ENCODE measurements at regions of chr4 and their contacts with region 1.

Region 1: DNA sequence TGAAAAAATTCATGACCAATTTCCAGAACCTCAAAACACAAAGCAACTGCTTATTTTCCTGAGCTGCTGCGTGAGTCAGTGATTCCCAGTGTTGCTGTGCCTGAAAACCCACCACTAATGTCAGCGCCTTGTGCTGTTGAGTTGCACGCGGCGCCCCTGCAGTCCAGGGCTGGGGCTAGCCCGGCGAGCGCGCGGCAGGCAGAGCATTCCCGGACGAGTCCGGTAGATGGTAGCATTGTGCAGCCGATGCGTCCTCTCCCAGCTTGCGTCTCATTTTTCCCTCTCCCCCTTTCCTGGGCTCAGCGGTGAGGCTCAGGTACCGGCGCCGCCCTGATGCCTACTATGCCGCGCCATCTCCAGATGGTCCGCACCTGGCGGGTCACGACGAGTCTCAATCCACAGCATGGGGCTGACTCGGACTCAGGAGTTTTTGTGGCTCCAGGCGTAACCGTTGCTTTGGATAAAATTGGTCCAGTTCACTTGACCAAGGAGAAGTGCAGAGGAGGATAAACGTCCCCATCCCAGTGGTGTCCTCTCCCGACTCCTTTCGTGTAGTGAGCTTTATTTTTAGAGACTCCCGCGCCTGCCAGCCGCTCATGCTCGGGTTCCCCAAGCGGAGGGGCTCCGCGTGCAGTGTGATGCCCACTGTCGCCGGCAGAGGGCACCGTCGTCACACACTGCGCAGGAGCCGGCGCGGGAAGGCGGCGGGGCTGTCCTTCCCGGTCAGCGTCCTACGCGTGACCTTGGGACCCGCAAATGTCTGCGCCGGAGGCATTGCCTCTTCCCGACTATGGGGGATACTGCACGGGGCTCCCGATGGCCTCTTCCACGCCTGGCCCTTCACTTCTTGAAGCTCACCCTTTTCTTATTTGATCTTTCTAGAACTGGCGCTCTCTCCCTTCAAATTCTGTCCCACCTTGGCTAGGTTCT is 53.6 kb upstream of the IGFBP7 start:
- DNase-seq: peak; percentile 76
- H3K27ac ChIP-seq: peak overlapping the region; percentile 81
- CTCF ChIP-seq: peak; percentile 97

Region 2: DNA sequence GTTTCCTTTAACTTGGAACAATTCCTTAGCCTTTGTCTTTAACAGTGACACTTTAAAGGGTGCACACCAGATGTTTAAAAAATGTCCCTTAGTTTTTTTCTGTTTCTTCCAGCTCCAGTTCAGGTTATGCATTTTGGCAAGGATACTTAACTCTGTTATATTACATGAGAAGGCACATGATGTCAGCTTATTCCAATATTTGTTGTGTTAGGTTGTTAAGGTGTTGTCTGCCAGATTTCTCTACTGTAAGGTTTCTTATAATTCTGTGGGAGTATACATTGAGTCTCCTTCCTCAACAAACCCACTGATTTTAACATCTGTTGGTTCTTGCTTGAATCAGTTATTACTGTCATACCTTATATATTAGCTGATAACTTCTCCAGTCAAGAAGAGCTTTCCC is 222.8 kb before region 1 on chr4:
- CTCF ChIA-PET with region 1: no interaction called
- POLR2A ChIA-PET with region 1: no interaction called
- DNase-seq: no peak
- H3K27ac ChIP-seq: no peak overlapping the region
- CTCF ChIP-seq: no peak

Region 3: DNA sequence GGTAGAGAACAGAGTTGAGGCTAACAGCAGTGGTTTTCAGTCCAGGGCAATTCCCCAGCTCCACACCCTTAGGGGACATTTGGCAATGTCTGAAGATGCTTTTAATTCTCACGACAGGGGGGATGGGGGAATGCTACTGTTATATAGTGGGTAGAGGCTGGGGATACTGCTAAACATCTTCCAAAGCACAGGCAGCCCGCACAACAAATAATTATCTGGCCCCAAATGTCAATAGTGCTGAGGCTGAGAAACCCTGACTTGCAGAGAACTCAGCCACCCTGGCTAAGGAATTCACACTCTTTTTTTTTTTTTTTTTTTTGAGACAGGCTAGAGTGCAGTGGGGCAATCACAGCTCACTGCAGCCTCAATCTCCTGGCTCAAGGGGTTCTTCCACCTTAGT is 124.5 kb before region 1 on chr4:
- CTCF ChIA-PET with region 1: interaction called, 16 read pairs
- POLR2A ChIA-PET with region 1: no interaction called
- DNase-seq: no peak
- H3K27ac ChIP-seq: peak overlapping the region; percentile 48
- CTCF ChIP-seq: no peak

Region 4: GRCh38 chr4:57190601-57191481 is 27.0 kb after region 1 on chr4:
- CTCF ChIA-PET with region 1: interaction called, 22 read pairs
- POLR2A ChIA-PET with region 1: no interaction called
- DNase-seq: no peak
- H3K27ac ChIP-seq: no peak overlapping the region
- CTCF ChIP-seq: no peak

Region 5: GRCh38 chr4:57233386-57233785 is 69.6 kb after region 1 on chr4:
- CTCF ChIA-PET with region 1: no interaction called
- POLR2A ChIA-PET with region 1: no interaction called
- DNase-seq: peak; percentile 55
- H3K27ac ChIP-seq: no peak overlapping the region
- CTCF ChIP-seq: no peak

Region 6: DNA sequence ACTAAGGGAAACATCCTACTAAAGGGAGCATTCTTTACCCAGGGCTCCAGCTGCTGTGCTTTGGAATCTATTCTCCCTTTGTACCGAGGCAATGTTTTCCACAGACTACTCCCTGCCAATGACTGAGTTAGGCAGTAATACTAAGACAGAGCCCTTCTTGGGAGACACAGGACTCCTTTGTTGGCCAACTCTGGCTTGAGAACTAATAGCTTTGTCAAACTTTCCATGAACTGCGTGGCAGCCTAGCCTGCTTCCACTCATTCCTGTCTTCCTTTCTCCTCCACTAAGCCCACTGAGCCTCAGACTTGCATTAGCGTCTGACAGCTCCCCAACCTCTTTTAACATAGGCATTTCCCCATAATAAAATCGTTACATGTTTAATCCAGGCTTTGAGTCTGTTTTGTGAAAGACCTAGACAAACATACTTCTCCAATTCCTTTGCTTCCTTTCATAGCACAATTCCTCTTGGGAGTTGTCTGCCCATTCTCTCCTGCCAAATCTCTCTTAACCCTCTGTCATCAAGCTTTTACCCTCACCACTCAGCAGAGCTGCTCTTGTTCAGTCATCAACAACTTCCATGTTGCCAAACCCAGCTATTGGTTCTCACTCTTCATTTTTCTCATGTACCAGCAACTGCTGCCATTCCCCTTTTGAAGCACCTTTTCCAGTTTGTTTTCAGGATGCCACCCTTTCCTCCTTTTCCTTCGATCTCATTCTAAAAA is 246.7 kb after region 1 on chr4:
- CTCF ChIA-PET with region 1: interaction called, 12 read pairs
- POLR2A ChIA-PET with region 1: no interaction called
- DNase-seq: no peak
- H3K27ac ChIP-seq: no peak overlapping the region
- CTCF ChIP-seq: no peak

Region 7: DNA sequence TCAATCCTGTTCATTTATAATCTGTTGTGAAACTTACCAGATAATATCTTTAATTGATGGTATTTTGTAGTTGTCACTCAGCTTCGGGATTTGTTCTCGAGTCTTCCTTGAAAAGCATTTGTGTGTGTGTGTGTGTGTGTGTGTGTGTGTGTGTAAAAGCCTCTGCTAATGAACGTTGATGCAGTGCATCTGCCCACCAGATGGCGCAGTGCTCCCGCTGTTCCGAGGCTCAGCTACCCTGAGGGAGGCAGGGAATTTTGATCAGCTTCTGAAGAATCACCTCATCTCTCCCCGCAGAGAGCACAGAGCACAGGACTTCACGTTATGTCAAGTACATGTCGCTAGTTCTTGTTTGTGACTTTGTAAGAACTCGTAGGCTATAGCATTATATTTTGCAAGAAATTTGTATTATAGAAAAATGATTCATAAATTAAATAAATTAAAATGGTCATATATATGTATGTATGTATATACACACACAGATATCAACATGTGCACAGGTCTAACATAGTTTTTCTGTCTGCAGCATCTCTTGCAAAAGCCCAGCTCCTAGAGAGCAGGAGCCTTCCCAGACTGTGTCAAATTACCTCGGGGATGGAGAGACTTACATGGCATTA is 263.1 kb after region 1 on chr4:
- CTCF ChIA-PET with region 1: interaction called, 27 read pairs
- POLR2A ChIA-PET with region 1: no interaction called
- DNase-seq: peak; percentile 75
- H3K27ac ChIP-seq: no peak overlapping the region
- CTCF ChIP-seq: peak; percentile 85

Region 8: GRCh38 chr4:57442831-57443291 is 279.1 kb after region 1 on chr4:
- CTCF ChIA-PET with region 1: interaction called, 16 read pairs
- POLR2A ChIA-PET with region 1: no interaction called
- DNase-seq: peak; percentile 44
- H3K27ac ChIP-seq: no peak overlapping the region
- CTCF ChIP-seq: peak; percentile 86